ENCODE measurements at regions of chr4 and their contacts with region 1.

Region 1: GRCh38 chr4:119628308-119629141 is at the start of gene PDE5A:
- DNase-seq: no peak
- ATAC-seq: peak; percentile 81
- H3K4me3 ChIP-seq: peak within 1 kb of the TSS; percentile 52 to 89
- H3K27ac ChIP-seq: peak within 1 kb of the TSS; percentile 93
- H3K4me1 ChIP-seq: peaks cover 19% of the 10 kb centered on the region
- H3K27me3 ChIP-seq: no peaks in the 10 kb centered on the region
- CTCF ChIP-seq: peak; percentile 89
- total RNA-seq, gene PDE5A: 114 TPM

Region 2: GRCh38 chr4:119314356-119314755 is 314.2 kb before region 1 on chr4:
- CTCF ChIA-PET with region 1: no interaction called
- POLR2A ChIA-PET with region 1: no interaction called
- in situ Hi-C with region 1: no loop called
- intact Hi-C with region 1: loop called (anchors 10 kb)
- DNase-seq: no peak
- ATAC-seq: peak; percentile 94
- H3K4me3 ChIP-seq: no peak overlapping the region
- H3K27ac ChIP-seq: no peak overlapping the region
- H3K4me1 ChIP-seq: no peaks in the 10 kb centered on the region
- H3K27me3 ChIP-seq: peaks cover 2% of the 10 kb centered on the region
- CTCF ChIP-seq: peak; percentile 48; the same call in 1 of the 2 replicates

Region 3: DNA sequence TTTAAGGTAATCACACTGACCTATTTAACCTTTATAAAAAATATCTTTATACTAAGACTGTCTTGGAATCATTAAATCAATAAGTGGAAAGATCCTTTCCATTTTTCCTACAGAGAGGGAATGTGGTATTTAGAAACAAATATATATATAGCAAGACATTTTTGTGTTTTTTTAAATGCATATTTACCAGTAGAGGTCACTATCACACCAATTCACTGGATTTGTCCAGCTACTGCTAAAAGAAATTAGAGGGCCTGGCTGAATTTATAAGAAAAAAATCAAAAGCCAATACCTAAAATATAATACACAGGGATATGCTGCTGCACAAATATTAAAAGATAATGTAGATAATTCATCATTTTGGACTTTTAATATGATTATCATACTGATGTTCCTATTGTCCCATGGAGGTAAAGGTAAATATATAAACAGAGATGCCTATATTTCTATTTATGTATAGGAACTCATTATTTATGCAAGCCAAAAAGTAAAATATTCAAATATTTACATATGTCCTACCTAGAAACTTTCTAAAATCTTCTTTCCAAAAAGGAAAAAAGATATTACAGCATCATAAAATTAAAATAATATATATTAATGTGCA is 69.4 kb before region 1 on chr4:
- CTCF ChIA-PET with region 1: no interaction called
- POLR2A ChIA-PET with region 1: no interaction called
- in situ Hi-C with region 1: no loop called
- intact Hi-C with region 1: loop called (anchors 5 kb)
- DNase-seq: peak; percentile 15
- ATAC-seq: no peak
- H3K4me3 ChIP-seq: no peak overlapping the region
- H3K27ac ChIP-seq: no peak overlapping the region
- H3K4me1 ChIP-seq: no peaks in the 10 kb centered on the region
- H3K27me3 ChIP-seq: no peaks in the 10 kb centered on the region
- CTCF ChIP-seq: peak; percentile 44; the same call in 1 of the 2 replicates

Region 4: DNA sequence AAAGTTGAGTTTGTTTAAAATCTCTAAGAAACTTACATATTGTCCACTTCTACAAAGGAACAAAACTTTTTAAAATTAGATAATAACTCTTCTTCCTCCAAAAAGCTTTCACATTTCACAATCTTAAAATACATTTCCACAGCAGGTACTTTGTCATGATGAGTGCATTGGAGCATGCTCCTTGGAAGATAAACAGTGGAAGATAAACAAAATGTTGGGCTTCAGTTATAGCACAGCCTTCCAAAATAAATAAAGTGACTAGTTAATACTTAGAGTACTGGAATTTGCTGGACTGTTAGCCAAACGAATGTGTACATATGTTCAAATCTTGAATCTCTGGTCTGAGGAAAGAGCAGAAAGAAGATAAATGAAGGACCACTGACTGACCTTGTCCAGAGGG is 55.0 kb after region 1 on chr4:
- CTCF ChIA-PET with region 1: no interaction called
- POLR2A ChIA-PET with region 1: interaction called, 3 read pairs
- in situ Hi-C with region 1: no loop called
- intact Hi-C with region 1: loop called (anchors 5 kb)
- DNase-seq: no peak
- ATAC-seq: peak; percentile 83
- H3K4me3 ChIP-seq: no peak overlapping the region
- H3K27ac ChIP-seq: peak overlapping the region; percentile 97
- H3K4me1 ChIP-seq: peaks cover 41% of the 10 kb centered on the region
- H3K27me3 ChIP-seq: no peaks in the 10 kb centered on the region
- CTCF ChIP-seq: no peak

Region 5: DNA sequence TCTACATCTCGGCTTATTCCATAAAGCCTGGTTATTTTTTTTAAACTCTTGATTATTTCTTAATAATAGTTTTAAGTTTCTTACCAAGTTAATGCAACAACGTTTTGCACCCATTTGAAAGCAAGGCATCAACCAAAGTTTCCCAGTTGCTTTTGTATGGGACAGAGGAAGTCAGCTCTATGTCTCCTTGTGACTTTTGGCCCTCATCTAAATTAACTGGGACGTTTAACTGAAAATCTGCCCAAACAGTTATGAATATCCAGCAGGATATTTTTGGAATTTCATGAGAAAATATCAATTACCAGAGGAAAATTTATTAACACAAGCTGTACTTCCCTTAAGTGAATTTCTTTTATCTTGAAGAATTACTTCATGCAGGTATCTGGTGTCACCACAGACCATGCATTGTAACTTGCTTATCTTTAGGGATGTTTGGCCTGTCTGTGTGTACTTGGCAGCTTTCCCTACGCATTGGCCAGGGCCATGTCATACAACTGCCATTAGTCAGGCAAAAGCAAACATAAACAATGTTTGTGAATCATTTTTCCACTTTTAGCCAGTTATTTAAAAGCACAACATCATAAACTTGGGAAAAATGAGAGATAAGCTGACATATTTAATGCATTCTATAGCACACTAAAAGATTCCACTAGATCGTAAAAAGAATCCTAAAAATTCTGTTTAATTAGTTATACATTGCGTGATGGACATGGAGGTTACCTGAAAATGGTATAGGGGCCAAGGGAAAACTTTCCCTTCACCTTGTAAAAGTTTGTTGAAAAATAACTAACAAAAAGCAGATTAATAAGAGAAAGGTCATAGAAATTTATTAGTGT is 101.5 kb after region 1 on chr4:
- CTCF ChIA-PET with region 1: interaction called, 4 read pairs
- POLR2A ChIA-PET with region 1: no interaction called
- in situ Hi-C with region 1: no loop called
- intact Hi-C with region 1: loop called (anchors 2 kb)
- DNase-seq: peak; percentile 81
- ATAC-seq: peak; percentile 94
- H3K4me3 ChIP-seq: no peak overlapping the region
- H3K27ac ChIP-seq: peak overlapping the region; percentile 98
- H3K4me1 ChIP-seq: peaks cover 23% of the 10 kb centered on the region
- H3K27me3 ChIP-seq: no peaks in the 10 kb centered on the region
- CTCF ChIP-seq: no peak

Region 6: GRCh38 chr4:119785963-119786362 is 157.4 kb after region 1 on chr4:
- CTCF ChIA-PET with region 1: no interaction called
- POLR2A ChIA-PET with region 1: no interaction called
- in situ Hi-C with region 1: no loop called
- intact Hi-C with region 1: loop called (anchors 2 kb)
- DNase-seq: no peak
- ATAC-seq: no peak
- H3K4me3 ChIP-seq: no peak overlapping the region
- H3K27ac ChIP-seq: no peak overlapping the region; the same call in 1 of the 2 replicates
- H3K4me1 ChIP-seq: no peaks in the 10 kb centered on the region
- H3K27me3 ChIP-seq: no peaks in the 10 kb centered on the region
- CTCF ChIP-seq: peak; percentile 18; the same call in 1 of the 2 replicates

Region 7: DNA sequence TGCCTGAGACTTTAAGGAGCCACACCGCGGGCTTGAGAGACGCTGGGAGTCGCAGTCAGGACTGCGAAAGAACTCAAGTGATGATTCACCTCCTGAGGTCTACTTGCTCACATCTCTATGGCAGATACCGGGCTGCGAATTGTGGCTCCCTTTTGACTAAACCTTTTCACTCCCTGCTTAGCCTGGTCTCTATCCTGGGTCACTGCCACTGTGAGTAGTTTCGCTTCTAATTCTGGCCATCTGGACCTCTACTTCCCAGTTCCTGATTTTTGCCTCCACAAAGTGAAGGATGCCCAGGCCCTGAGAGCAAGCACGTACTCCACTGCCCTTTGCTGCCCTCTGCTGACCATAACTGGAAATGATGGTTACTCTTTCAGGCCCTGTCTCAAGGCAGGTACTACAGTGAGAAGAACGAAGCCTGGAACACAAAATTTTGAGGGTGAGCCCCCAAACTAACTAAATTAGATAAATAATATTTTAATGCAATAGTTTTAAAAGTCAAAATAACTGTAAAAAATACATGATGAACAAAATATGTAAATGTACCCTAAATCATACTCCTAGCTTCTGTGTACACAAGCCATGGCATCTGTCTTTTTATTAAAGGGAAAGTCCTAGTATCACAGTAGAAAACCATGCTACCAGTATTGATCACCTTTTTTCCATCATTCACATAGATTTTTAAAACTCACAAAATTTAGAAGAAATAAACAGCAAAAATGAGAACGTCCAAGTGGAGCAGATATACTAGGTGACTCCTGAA is 421.4 kb after region 1 on chr4:
- CTCF ChIA-PET with region 1: no interaction called
- POLR2A ChIA-PET with region 1: interaction called, 3 read pairs
- in situ Hi-C with region 1: no loop called
- intact Hi-C with region 1: loop called (anchors 1 kb)
- DNase-seq: peak; percentile 83
- ATAC-seq: peak; percentile 96
- H3K4me3 ChIP-seq: peak overlapping the region in 1 of 2 experiments; percentile 48; a peak in 2 of 4 replicates
- H3K27ac ChIP-seq: peak overlapping the region; percentile 92
- H3K4me1 ChIP-seq: peaks cover 6% of the 10 kb centered on the region
- H3K27me3 ChIP-seq: no peaks in the 10 kb centered on the region
- CTCF ChIP-seq: peak; percentile 81